Posterior cingulate gyrus (tissue), 11 donors: ENCODE measurements at regions of chr7 and their contacts with region 1.

Region 1: GRCh38 chr7:33109005-33109757 is at the start of gene RP9:
- DNase-seq: peak; percentile 40 to 95 (median 63)

Region 2: GRCh38 chr7:32761451-32762205 is 347.6 kb before region 1 on chr7:
- intact Hi-C with region 1: loop called (anchors 5 kb)
- DNase-seq: peak in 5 of 10 donors; percentile 11 to 89 (median 80)

Region 3: DNA sequence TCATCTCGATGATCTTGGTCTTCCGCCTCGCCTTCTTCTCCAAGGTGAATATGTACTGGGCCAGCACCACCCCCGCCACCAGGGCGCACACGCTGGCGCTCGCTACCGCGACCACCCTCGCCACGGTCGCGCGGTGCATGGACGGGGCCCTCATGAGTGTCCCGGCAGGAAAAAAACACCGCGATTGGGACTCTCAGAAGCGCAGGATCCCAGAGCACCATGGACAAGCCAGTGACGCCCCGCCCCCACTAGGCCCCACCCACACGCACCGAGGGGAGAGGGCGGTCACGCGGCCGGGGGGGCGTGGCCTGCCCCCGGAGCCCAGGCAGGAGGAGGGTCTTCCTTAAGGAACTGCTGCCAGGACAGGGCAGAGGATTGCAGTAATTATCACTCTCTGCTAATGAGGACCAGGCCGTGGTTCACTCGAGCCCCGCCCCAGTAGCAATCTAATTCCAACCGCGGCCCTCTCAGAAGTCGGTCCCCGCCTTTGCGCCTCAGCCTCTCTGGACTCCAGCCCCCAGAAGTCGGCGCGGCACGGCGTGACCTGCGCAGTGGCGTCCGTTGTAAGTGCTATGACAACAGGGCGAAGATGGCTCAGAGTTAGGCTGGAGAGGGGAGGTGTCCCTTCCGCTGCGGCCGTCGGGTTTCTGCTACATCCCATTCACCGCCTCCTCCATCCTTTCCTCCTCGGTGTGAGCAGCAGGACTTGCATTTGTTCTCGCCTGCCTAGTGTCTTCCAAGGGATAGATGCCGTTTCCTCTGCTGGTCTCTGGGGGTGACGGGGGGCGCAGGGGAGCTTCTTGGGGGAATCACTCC is 20.0 kb after region 1 on chr7 and contains the start of gene BBS9:
- intact Hi-C with region 1: loop called (anchors 2 kb)
- DNase-seq: peak; percentile 90 to 99 (median 94)

Region 4: DNA sequence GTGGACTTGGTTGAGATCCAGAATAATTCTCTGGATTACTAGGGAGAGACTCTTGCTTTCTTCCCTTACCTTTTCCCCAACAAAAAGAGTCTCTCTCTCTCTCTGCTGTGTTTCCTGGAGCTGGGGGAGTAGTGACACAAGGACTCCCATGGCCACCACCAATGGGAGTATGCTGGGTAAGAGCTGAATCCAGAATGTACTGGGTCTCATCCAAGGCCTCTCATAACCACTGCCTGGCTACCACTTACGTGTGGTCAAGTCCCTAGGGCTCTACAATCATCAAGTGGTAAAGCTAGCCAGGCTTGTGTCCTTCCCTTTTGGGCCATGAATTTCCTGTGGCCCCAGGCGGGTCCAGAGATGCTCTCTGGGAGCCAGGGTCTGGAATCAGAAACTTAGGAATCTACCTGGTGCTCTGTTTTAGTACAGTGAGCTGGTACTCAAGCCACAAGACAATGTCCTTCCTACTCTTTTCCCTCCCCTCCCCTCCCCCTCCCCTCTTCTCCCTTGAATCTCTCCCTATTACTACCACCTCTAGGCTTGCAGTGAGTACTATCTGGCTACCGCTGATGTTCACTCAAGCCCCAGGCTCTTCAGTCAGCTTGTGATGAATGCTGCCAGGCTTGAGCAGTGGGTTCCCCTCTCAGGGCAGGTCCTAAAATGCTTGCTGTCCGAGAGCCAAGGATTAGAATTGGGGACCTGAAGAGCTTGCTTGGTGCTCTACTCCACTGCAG is 216.7 kb after region 1 on chr7:
- intact Hi-C with region 1: no loop called
- DNase-seq: no peak